T-cell (primary cell): ENCODE measurements at regions of chr9 and their contacts with region 1.

Region 1: GRCh38 chr9:133371261-133371711 is 4.6 kb downstream of the SURF4 start:
- DNase-seq: peak; percentile 41 to 84 (median 61)
- ATAC-seq: peak; percentile 53 to 67 (median 54)
- H3K4me3 ChIP-seq: peak overlapping the region; percentile 31 to 55
- H3K4me3 Mint-ChIP-seq: peak overlapping the region; percentile 73 to 92 (median 76)
- H3K27ac ChIP-seq: peak overlapping the region; percentile 94
- H3K27ac Mint-ChIP-seq: peak overlapping the region; percentile 93 to 95
- H3K4me1 ChIP-seq: peaks cover 46 to 88% of the 10 kb centered on the region in 2 experiments
- H3K4me1 Mint-ChIP-seq: peaks cover 70 to 84% (median 76%) of the 10 kb centered on the region in 3 donors
- H3K27me3 ChIP-seq: no peaks in the 10 kb centered on the region
- H3K27me3 Mint-ChIP-seq: no peaks in the 10 kb centered on the region

Region 2: DNA sequence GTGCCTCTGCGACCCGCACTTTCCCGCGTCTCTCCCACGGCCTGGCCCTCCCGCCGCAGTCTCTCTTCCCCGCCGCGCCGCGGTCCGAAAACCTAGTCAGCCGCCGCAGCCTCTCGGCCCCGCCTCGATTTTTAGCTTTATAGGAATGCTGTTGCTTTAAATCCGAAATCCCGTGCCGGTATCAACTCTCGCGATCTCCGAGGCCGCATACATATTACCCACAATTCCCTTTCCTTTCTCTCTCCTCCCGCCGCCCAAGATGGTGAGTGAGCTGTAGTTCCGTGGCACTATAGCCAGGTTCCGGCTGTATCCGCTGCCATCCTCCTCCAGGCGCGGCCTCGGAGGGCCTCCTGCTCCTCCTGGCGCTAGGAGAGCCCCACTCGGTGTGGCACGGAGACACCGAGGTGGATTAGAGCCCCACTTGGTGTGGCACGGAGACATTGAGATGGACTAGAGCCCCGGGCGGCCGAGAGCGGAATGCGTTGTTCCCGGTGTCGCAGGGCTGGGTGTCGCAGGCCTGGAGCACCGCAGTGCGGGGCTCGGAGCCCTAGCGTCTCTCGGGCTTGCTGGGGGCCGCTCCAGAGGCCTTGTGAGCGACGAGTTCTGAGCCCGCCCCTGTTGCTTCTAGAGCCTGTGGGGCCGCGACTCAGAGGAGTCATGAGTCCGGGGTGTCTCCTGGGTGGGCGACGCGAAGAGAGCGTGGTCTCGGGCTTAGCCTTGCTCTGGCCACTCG is 23.1 kb before region 1 on chr9 and contains the starts of genes MED22 and RPL7A:
- CTCF ChIA-PET with region 1: interaction called, 3 to 11 read pairs
- POLR2A ChIA-PET with region 1: interaction called in 1 of 2 experiments, 5 read pairs
- DNase-seq: peak; percentile 83 to 96 (median 90)
- ATAC-seq: peak; percentile 91 to 93 (median 92)
- H3K4me3 ChIP-seq: peak within 1 kb of the TSS; percentile 94 to 100
- H3K4me3 Mint-ChIP-seq: peak within 1 kb of the TSS; percentile 92 to 97 (median 96)
- H3K27ac ChIP-seq: peak within 1 kb of the TSS; percentile 95
- H3K27ac Mint-ChIP-seq: peak within 1 kb of the TSS; percentile 92 to 98
- H3K4me1 ChIP-seq: peaks cover 13 to 36% of the 10 kb centered on the region in 2 experiments
- H3K4me1 Mint-ChIP-seq: peaks cover 41 to 44% (median 41%) of the 10 kb centered on the region in 3 donors
- H3K27me3 ChIP-seq: peaks cover 0 to 3% of the 10 kb centered on the region in 2 experiments
- H3K27me3 Mint-ChIP-seq: no peaks in the 10 kb centered on the region
- total RNA-seq, gene MED22: 25.9 to 44.8 (median 40.7) TPM
- total RNA-seq, gene RPL7A: 2,623 to 2,692 (median 2,659) TPM

Region 3: GRCh38 chr9:133356391-133357091 is 14.7 kb before region 1 on chr9 and contains the starts of genes SURF1 and SURF2:
- CTCF ChIA-PET with region 1: interaction called, 3 to 16 read pairs
- POLR2A ChIA-PET with region 1: interaction called, 4 to 9 read pairs
- DNase-seq: peak; percentile 78 to 95 (median 88)
- ATAC-seq: peak; percentile 89 to 97 (median 94)
- H3K4me3 ChIP-seq: peak within 1 kb of the TSS; percentile 79 to 87
- H3K4me3 Mint-ChIP-seq: peak within 1 kb of the TSS; percentile 82 to 87 (median 84)
- H3K27ac ChIP-seq: peak within 1 kb of the TSS; percentile 36
- H3K27ac Mint-ChIP-seq: peak within 1 kb of the TSS; percentile 84 to 85
- H3K4me1 ChIP-seq: peaks cover 9 to 51% of the 10 kb centered on the region in 2 experiments
- H3K4me1 Mint-ChIP-seq: peaks cover 25 to 47% (median 44%) of the 10 kb centered on the region in 3 donors
- H3K27me3 ChIP-seq: no peaks in the 10 kb centered on the region
- H3K27me3 Mint-ChIP-seq: no peaks in the 10 kb centered on the region
- total RNA-seq, gene SURF1: 33.0 to 58.7 (median 58.3) TPM
- total RNA-seq, gene SURF2: 17.0 to 25.3 (median 24.9) TPM

Region 4: DNA sequence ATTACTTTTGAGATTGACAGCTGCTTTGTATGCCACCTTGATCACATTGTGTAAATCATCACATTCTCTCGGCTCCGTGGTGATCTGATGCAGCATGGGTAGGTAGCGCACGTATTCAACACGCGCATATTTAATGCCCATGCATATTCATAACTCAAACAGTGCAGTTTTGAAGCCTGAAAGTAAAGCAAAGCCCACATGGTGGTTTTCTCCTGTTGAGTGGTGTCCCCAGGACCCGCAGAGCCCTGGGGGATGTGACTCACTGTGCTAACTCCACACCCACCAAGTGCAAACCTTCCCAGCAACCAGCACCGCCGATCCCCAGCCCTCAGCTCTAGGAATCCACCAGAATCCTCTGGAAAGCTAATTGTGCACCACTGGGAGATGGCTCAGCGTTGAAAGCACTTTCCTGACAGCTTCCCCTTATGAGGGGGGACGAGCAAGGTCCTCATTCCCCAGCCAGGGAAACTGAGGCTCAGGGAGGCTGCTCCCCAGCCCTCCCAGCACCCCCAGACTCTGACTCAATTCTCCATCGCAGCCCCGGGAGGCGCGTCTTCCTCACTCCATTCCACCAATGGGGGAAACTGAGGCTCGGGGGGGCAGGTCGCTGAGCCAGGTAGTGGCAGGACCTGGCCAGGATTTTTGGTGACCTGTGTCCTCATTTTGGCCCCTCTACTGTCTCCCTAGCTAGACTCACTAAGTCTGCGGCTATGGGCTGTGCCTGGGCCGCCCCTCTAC is 320.5 kb after region 1 on chr9:
- CTCF ChIA-PET with region 1: no interaction called
- POLR2A ChIA-PET with region 1: no interaction called
- DNase-seq: no peak
- ATAC-seq: no peak
- H3K4me3 ChIP-seq: no peak overlapping the region
- H3K4me3 Mint-ChIP-seq: no peak overlapping the region
- H3K27ac ChIP-seq: no peak overlapping the region
- H3K27ac Mint-ChIP-seq: peak overlapping the region in 1 of 2 donors; percentile 22
- H3K4me1 ChIP-seq: peaks cover 0 to 5% of the 10 kb centered on the region in 2 experiments
- H3K4me1 Mint-ChIP-seq: peaks cover 7 to 13% (median 13%) of the 10 kb centered on the region in 3 donors
- H3K27me3 ChIP-seq: no peaks in the 10 kb centered on the region
- H3K27me3 Mint-ChIP-seq: no peaks in the 10 kb centered on the region